Sciatic nerve (tissue), 2 donors: ENCODE measurements at regions of chr6 and their contacts with region 1.

Region 1: GRCh38 chr6:12174878-12175277 is 115.3 kb upstream of the EDN1 start:
- DNase-seq: no peak
- ATAC-seq: no peak

Region 2: DNA sequence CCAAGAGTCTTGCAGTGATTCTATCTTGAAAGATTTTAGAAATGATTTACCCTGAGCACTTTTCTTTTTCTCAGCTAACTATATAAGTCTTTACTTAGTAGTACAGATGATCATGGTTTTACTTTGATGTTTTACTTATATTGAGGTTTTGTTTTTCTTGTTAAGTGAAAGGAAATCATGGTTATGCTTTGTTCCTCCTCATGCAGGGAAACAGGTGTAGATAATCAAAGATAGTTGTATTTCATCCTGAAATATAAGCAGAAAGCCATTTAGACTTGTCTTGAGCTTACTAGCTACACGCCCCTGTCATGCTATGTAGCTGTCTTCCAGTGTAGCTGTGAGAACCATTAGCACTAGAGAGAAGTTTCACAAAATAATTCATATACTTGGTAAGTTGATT is 48.8 kb before region 1 on chr6:
- intact Hi-C with region 1: no loop called
- DNase-seq: no peak
- ATAC-seq: no peak

Region 3: DNA sequence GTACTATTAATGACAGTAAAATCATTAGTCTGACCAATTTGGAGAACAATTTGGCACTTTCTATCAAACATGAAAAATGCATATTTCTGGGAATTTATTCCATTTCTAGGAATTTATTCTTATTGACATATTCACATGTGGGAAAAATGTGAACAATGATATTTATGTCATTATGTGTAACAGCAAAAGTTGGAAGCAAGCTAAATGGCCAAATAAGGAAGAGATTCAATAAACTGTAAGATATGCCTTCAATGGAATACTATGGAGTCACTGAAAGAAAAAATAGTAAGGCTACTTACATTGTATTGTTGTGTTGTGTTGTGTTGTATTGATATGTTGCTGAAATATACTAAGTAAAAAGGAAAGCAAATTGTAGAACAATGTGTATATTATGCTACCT is 14.8 kb after region 1 on chr6:
- intact Hi-C with region 1: loop called (anchors 2 kb)
- DNase-seq: no peak
- ATAC-seq: no peak